Naive thymus-derived CD4-positive, alpha-beta T cell (primary cell): ENCODE measurements at regions of chr15 and their contacts with region 1.

Region 1: DNA sequence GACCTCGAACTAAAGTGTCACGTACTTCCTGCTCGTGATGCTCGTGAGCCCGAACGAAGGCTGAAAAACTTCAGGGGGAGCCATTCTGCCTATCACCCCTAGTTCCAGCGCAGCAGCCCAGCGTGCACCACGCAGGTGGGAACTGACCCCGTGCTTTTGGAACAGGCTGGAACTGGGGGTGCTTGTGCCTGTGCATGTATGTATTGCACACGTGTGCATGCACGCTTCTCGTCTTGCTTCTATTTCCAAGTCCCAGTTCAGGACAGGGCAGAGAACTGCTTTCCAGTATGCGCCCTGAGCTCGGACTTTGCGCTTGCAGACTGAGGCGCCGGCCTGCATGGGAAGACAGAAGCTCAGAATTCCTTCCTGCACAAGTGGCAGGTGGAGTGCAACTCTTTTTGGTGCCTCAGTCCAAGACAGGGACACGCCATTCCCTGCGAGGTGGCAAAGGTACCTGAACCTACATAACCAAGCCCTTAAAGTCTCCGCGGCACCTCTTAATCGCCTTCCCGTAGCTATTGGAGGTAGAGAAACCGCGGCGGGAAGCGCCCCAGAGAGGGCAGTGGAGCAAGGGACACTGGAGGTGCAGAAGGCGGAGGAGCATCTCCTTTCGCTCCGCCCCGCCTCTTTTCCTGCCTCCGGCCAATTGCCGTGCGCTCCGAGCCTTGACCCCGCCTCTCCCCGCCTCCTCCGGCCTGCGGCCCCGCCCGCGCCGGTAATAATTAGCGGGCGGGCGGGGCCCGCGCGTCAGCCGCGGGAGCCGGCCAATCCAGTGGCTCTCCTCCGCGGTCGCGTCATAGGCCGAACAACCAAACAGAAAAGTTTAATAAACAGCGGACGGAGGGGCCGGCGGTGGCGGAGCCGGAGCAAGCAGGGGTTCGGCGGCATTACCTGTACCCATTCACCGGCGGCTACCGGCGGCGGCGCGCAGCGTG is at the start of gene ZFAND6:
- DNase-seq: peak; percentile 87 to 97 (median 94)
- ATAC-seq: peak; percentile 96
- H3K4me3 ChIP-seq: peak within 1 kb of the TSS; percentile 92
- H3K4me3 Mint-ChIP-seq: peak within 1 kb of the TSS; percentile 89 to 97 (median 94)
- H3K27ac ChIP-seq: peak within 1 kb of the TSS; percentile 83
- H3K27ac Mint-ChIP-seq: peak within 1 kb of the TSS; percentile 89 to 98 (median 94)
- H3K4me1 ChIP-seq: peaks cover 9 to 12% of the 10 kb centered on the region in 2 donors
- H3K4me1 Mint-ChIP-seq: peaks cover 14 to 36% (median 31%) of the 10 kb centered on the region in 7 donors
- H3K27me3 ChIP-seq: no peaks in the 10 kb centered on the region
- H3K27me3 Mint-ChIP-seq: no peaks in the 10 kb centered on the region
- total RNA-seq, gene ZFAND6: 51.0 to 113 (median 65.5) TPM

Region 2: GRCh38 chr15:79572691-79573404 is 486.3 kb before region 1 on chr15:
- CTCF ChIA-PET with region 1: no interaction called
- POLR2A ChIA-PET with region 1: no interaction called
- intact Hi-C with region 1: no loop called
- DNase-seq: no peak
- ATAC-seq: no peak
- H3K4me3 ChIP-seq: no peak overlapping the region
- H3K4me3 Mint-ChIP-seq: no peak overlapping the region
- H3K27ac ChIP-seq: no peak overlapping the region
- H3K27ac Mint-ChIP-seq: no peak overlapping the region
- H3K4me1 ChIP-seq: no peaks in the 10 kb centered on the region
- H3K4me1 Mint-ChIP-seq: peaks cover 0 to 1% (median 0%) of the 10 kb centered on the region in 7 donors
- H3K27me3 ChIP-seq: no peaks in the 10 kb centered on the region
- H3K27me3 Mint-ChIP-seq: peaks cover 7 to 18% (median 9%) of the 10 kb centered on the region in 5 donors

Region 3: GRCh38 chr15:79896637-79897379 is 162.3 kb before region 1 on chr15 and contains the start of gene MTHFS:
- CTCF ChIA-PET with region 1: interaction called, 3 read pairs
- POLR2A ChIA-PET with region 1: interaction called, 4 read pairs
- intact Hi-C with region 1: loop called (anchors 1 kb)
- DNase-seq: peak; percentile 73 to 87 (median 83)
- ATAC-seq: peak; percentile 92
- H3K4me3 ChIP-seq: peak within 1 kb of the TSS; percentile 71
- H3K4me3 Mint-ChIP-seq: peak within 1 kb of the TSS; percentile 91 to 100 (median 99)
- H3K27ac ChIP-seq: peak within 1 kb of the TSS; percentile 92
- H3K27ac Mint-ChIP-seq: peak within 1 kb of the TSS; percentile 97 to 100 (median 100)
- H3K4me1 ChIP-seq: peaks cover 20 to 23% of the 10 kb centered on the region in 2 donors
- H3K4me1 Mint-ChIP-seq: peaks cover 28 to 49% (median 46%) of the 10 kb centered on the region in 7 donors
- H3K27me3 ChIP-seq: no peaks in the 10 kb centered on the region
- H3K27me3 Mint-ChIP-seq: no peaks in the 10 kb centered on the region
- total RNA-seq, gene MTHFS: 15.8 to 31.8 (median 20.3) TPM

Region 4: DNA sequence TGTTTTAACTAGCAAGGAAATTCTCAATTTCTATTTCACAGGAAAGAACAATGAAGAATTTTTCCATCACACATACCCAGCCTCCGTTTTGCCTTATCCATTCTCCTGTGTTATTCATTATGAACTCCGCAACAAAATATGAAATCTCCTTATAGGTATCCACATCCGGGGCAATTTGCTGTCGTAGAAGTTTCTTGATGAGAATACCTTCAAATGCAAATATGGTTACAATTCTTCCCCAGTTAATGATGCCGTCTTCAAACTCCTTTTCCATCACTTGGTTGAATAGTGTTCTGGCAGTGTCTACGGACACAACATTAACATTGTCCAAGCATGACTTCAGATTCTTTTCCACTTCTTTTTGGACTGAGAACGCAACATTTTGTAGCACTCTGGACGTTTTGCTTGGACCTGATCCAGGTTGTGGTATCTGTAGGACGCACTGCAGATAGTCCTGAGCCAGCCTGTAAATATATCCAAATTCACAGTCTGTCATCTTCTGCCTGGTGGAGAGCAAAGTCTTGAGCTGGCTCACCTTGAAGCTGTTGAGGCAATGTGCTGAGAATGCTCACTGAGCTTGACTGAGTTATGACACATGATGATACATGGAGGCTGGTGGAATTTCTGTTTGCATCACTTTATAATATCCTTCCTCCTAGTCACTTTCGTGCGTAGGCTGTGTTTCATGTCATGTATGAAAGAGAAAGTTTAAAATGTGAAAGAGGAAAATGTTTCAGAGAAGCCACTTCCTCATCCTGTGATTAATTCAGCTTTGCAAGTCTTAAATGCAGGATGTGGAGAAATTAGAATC is 88.3 kb before region 1 on chr15 and contains the start of gene BCL2A1:
- CTCF ChIA-PET with region 1: no interaction called
- POLR2A ChIA-PET with region 1: interaction called, 10 read pairs
- intact Hi-C with region 1: loop called (anchors 1 kb)
- DNase-seq: peak; percentile 30 to 85 (median 80)
- ATAC-seq: peak; percentile 91
- H3K4me3 ChIP-seq: peak within 1 kb of the TSS; percentile 81
- H3K4me3 Mint-ChIP-seq: peak within 1 kb of the TSS; percentile 88 to 98 (median 94)
- H3K27ac ChIP-seq: peak within 1 kb of the TSS; percentile 75
- H3K27ac Mint-ChIP-seq: peak within 1 kb of the TSS; percentile 93 to 99 (median 95)
- H3K4me1 ChIP-seq: peaks cover 27 to 39% of the 10 kb centered on the region in 2 donors
- H3K4me1 Mint-ChIP-seq: peaks cover 41 to 66% (median 58%) of the 10 kb centered on the region in 7 donors
- H3K27me3 ChIP-seq: no peaks in the 10 kb centered on the region
- H3K27me3 Mint-ChIP-seq: no peaks in the 10 kb centered on the region
- total RNA-seq, gene BCL2A1: 27.3 to 119 (median 31.0) TPM

Region 5: GRCh38 chr15:80072285-80072994 is 13.3 kb after region 1 on chr15:
- CTCF ChIA-PET with region 1: interaction called, 7 read pairs
- POLR2A ChIA-PET with region 1: interaction called, 40 read pairs
- intact Hi-C with region 1: loop called (anchors 1 kb)
- DNase-seq: peak in 7 of 9 donors; percentile 56 to 80 (median 63)
- ATAC-seq: peak; percentile 97
- H3K4me3 ChIP-seq: peak overlapping the region; percentile 10
- H3K4me3 Mint-ChIP-seq: peak overlapping the region; percentile 58 to 94 (median 84)
- H3K27ac ChIP-seq: peak overlapping the region; percentile 61
- H3K27ac Mint-ChIP-seq: peak overlapping the region; percentile 17 to 85 (median 65)
- H3K4me1 ChIP-seq: peaks cover 8 to 14% of the 10 kb centered on the region in 2 donors
- H3K4me1 Mint-ChIP-seq: peaks cover 36 to 89% (median 78%) of the 10 kb centered on the region in 7 donors
- H3K27me3 ChIP-seq: no peaks in the 10 kb centered on the region
- H3K27me3 Mint-ChIP-seq: no peaks in the 10 kb centered on the region

Region 6: GRCh38 chr15:80152180-80152845 is 93.2 kb after region 1 on chr15:
- CTCF ChIA-PET with region 1: no interaction called
- POLR2A ChIA-PET with region 1: interaction called, 8 read pairs
- intact Hi-C with region 1: loop called (anchors 1 kb)
- DNase-seq: peak; percentile 46 to 86 (median 69)
- ATAC-seq: peak; percentile 84
- H3K4me3 ChIP-seq: peak overlapping the region; percentile 46
- H3K4me3 Mint-ChIP-seq: peak overlapping the region; percentile 73 to 97 (median 88)
- H3K27ac ChIP-seq: peak overlapping the region; percentile 64
- H3K27ac Mint-ChIP-seq: peak overlapping the region; percentile 70 to 90 (median 83)
- H3K4me1 ChIP-seq: peaks cover 0 to 7% of the 10 kb centered on the region in 2 donors
- H3K4me1 Mint-ChIP-seq: peaks cover 0 to 36% (median 22%) of the 10 kb centered on the region in 7 donors
- H3K27me3 ChIP-seq: no peaks in the 10 kb centered on the region
- H3K27me3 Mint-ChIP-seq: peaks cover 0 to 18% (median 0%) of the 10 kb centered on the region in 5 donors

Region 7: DNA sequence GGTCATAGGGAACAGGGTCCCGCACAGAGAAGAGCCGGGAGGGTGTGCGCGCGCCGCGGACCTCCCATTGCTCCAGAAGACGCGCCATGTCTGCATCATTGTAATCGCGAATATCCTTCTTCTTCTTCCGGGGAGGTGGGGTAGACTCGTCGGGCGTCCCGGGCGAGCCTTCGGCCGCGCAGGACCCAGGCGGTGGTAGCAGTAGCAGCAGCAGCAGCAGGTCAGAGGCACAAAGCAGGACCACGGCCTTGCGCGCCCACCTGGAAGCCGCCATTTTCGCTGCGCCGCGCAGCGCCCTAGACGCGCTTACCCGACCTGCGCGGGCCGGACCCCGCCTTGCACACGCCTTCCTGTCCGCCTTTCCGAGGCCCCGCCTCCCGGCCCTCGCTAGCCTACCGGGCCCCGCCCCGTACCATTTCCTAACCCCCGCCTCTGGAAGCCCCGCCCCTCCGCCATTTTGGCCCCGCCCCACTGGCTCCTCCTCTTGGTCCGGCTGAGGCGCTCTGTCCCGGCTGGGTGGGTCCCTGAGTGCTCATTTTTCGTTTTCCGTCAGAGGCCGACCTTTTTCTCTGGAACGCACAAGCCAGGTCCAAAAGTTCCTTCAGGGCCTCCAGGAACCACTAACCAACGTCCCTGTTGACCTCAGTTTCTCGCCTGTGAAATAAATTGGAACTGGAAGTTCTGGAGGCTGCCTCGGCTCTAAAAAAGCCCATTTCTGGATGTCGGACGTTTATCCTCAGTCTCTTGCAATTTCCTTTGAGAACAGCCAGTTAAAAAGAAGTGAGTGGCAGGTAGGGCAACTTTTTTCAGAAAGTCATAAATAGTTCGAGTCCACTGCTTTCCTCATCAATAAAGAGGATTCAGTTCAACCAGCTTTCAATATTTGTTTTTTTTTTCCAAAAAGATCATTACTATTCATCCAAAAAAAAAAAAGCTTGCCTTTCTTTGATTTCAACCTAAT is 930.7 kb after region 1 on chr15 and contains the start of gene MESD:
- CTCF ChIA-PET with region 1: no interaction called
- POLR2A ChIA-PET with region 1: no interaction called
- intact Hi-C with region 1: loop called in 1 of 2 experiments (anchors 5 kb)
- DNase-seq: peak; percentile 89 to 97 (median 93)
- ATAC-seq: peak; percentile 99
- H3K4me3 ChIP-seq: peak within 1 kb of the TSS; percentile 95
- H3K4me3 Mint-ChIP-seq: peak within 1 kb of the TSS; percentile 95 to 100 (median 98)
- H3K27ac ChIP-seq: peak within 1 kb of the TSS; percentile 90
- H3K27ac Mint-ChIP-seq: peak within 1 kb of the TSS; percentile 92 to 99 (median 99)
- H3K4me1 ChIP-seq: peaks cover 28 to 45% of the 10 kb centered on the region in 2 donors
- H3K4me1 Mint-ChIP-seq: peaks cover 37 to 68% (median 64%) of the 10 kb centered on the region in 7 donors
- H3K27me3 ChIP-seq: no peaks in the 10 kb centered on the region
- H3K27me3 Mint-ChIP-seq: no peaks in the 10 kb centered on the region
- total RNA-seq, gene MESD: 17.1 to 42.5 (median 38.3) TPM

Region 8: GRCh38 chr15:81296673-81297072 is 1237.6 kb after region 1 on chr15:
- CTCF ChIA-PET with region 1: no interaction called
- POLR2A ChIA-PET with region 1: interaction called, 3 read pairs
- intact Hi-C with region 1: loop called in 1 of 2 experiments (anchors 10 kb)
- DNase-seq: peak; percentile 38 to 87 (median 81)
- ATAC-seq: peak; percentile 69
- H3K4me3 ChIP-seq: peak overlapping the region; percentile 74
- H3K4me3 Mint-ChIP-seq: peak overlapping the region; percentile 80 to 100 (median 98)
- H3K27ac ChIP-seq: peak overlapping the region; percentile 87
- H3K27ac Mint-ChIP-seq: peak overlapping the region; percentile 93 to 100 (median 96)
- H3K4me1 ChIP-seq: peaks cover 52 to 59% of the 10 kb centered on the region in 2 donors
- H3K4me1 Mint-ChIP-seq: peaks cover 34 to 66% (median 64%) of the 10 kb centered on the region in 7 donors
- H3K27me3 ChIP-seq: no peaks in the 10 kb centered on the region
- H3K27me3 Mint-ChIP-seq: no peaks in the 10 kb centered on the region